Activated T-helper 1 cell treated with anti-CD3 and anti-CD28 coated beads, Interleukin-12 subunit alpha, Interleukin-12 subunit beta, Interleukin-2, Interleukin-4 antibody, amounts not matched to agents 30 ng/mL and 10 ng/mL and 1 ng/mL, durations not matched to agents 14 hours and 24 hours and 36 hours (primary cell): ENCODE measurements at regions of chr2 and their contacts with region 1.

Region 1: GRCh38 chr2:202375609-202376408 is at the start of gene BMPR2:
- DNase-seq: peak; percentile 84
- H3K4me3 Mint-ChIP-seq: peak within 1 kb of the TSS; percentile 99
- H3K27ac Mint-ChIP-seq: peak within 1 kb of the TSS; percentile 83
- H3K4me1 Mint-ChIP-seq: peaks cover 31% of the 10 kb centered on the region
- H3K27me3 Mint-ChIP-seq: no peaks in the 10 kb centered on the region
- total RNA-seq, gene BMPR2: 5.5 and 6.1 TPM in 2 replicates

Region 2: DNA sequence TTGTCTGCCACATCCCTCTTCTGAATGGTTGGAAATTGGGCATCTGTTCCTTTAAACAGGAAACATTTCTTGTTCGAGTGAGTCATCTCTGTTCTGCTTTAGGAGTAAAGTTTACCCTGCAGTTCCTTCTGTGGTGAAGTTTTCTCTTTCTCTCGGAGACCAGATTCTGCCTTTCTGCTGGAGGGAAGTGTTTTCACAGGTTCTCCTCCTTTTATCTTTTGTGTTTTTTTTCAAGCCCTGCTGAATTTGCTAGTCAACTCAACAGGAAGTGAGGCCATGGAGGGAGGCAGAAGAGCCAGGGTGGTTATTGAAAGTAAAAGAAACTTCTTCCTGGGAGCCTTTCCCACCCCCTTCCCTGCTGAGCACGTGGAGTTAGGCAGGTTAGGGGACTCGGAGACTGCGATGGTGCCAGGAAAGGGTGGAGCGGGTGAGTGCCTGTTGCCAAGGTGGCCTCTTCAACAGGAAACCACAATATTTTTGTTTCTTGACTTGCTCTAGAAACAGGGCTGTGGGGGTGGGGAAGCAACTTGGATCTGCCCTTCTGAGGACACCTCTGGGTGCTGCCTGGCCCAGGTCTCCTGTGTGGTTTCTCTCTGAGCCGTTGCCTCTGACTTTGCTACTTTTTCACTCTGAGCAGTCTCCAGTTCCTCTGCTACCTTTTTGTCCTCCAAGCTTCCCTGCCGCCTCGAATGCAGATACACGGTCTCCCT is 1117.7 kb before region 1 on chr2:
- intact Hi-C with region 1: loop called (anchors 10 kb)
- DNase-seq: peak; percentile 93
- H3K4me3 Mint-ChIP-seq: peak overlapping the region; percentile 91
- H3K27ac Mint-ChIP-seq: peak overlapping the region; percentile 100
- H3K4me1 Mint-ChIP-seq: peaks cover 84% of the 10 kb centered on the region
- H3K27me3 Mint-ChIP-seq: no peaks in the 10 kb centered on the region

Region 3: GRCh38 chr2:202238234-202239197 is 137.3 kb before region 1 on chr2 and contains the start of gene SUMO1:
- intact Hi-C with region 1: loop called (anchors 2 kb)
- DNase-seq: peak; percentile 89
- H3K4me3 Mint-ChIP-seq: peak within 1 kb of the TSS; percentile 98
- H3K27ac Mint-ChIP-seq: peak within 1 kb of the TSS; percentile 93
- H3K4me1 Mint-ChIP-seq: peaks cover 26% of the 10 kb centered on the region
- H3K27me3 Mint-ChIP-seq: peaks cover 4% of the 10 kb centered on the region
- total RNA-seq, gene SUMO1: 126 and 127 TPM in 2 replicates

Region 4: DNA sequence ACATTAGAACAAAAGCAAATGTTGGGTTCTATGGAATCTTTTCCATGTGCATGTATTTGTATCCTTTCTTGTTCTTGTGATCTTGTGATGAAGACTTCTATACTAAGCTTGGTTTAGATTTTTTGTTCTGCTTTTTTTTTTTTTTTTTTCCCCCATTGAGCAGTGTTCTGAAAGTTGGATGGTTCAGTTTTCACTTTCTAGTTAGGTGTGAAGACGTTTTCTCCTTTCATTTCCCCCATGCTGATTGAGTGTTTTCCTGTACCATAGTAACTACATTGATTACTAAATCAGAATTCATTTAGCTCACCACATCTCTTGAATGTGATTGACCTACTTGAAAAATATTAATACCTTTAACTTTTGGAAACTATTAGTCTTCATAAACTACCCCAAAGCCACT is 76.1 kb before region 1 on chr2:
- intact Hi-C with region 1: loop called (anchors 5 kb)
- DNase-seq: no peak
- H3K4me3 Mint-ChIP-seq: no peak overlapping the region
- H3K27ac Mint-ChIP-seq: peak overlapping the region; percentile 71
- H3K4me1 Mint-ChIP-seq: peaks cover 16% of the 10 kb centered on the region
- H3K27me3 Mint-ChIP-seq: no peaks in the 10 kb centered on the region

Region 5: GRCh38 chr2:202911512-202912341 is 535.9 kb after region 1 on chr2 and contains the starts of genes CARF and WDR12:
- intact Hi-C with region 1: loop called (anchors 1 kb)
- DNase-seq: peak; percentile 87
- H3K4me3 Mint-ChIP-seq: peak within 1 kb of the TSS; percentile 96
- H3K27ac Mint-ChIP-seq: peak within 1 kb of the TSS; percentile 98
- H3K4me1 Mint-ChIP-seq: peaks cover 31% of the 10 kb centered on the region
- H3K27me3 Mint-ChIP-seq: no peaks in the 10 kb centered on the region
- total RNA-seq, gene CARF: 3.6 and 4.3 TPM in 2 replicates
- total RNA-seq, gene WDR12: 149 and 165 TPM in 2 replicates

Region 6: DNA sequence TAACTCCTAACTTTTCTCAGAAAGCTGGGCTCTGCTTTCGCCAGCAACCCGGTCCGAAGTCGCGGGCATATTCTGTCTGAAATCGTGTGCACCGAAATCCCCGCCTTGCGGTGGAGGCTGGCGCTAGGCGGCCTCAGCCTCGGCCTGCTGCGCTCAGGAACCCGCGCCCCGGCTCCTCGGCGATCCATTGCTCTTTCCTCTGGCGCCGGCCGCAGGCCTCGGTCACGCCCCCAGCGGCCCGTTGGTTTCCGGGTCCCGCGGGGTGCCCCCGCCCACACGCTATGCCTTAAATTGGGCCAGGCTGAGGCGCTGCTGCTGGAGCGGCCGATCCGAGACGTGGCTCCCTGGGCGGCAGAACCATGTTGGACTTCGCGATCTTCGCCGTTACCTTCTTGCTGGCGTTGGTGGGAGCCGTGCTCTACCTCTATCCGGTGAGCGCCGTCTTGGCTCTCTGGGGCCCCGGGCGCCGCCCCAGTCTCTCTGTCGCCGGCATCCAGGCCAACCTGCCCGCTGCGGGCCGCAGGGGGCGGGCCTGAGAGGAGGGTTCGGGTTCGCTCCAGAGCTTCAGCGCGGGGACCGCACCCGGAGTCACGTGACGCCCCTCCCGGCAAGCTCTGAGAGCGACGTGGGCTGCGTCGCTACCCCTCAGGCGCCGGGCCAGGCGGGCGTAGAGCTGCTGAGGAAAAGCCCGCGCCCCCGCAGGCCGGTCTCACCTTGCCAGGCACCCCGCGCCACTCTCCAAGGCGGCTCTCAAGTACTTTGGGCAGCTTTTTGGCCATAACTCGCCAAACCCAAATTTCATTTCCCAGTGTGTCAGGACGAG is 863.1 kb after region 1 on chr2 and contains the start of gene CYP20A1:
- intact Hi-C with region 1: loop called (anchors 2 kb)
- DNase-seq: peak; percentile 97
- H3K4me3 Mint-ChIP-seq: peak within 1 kb of the TSS; percentile 94
- H3K27ac Mint-ChIP-seq: peak within 1 kb of the TSS; percentile 98
- H3K4me1 Mint-ChIP-seq: peaks cover 26% of the 10 kb centered on the region
- H3K27me3 Mint-ChIP-seq: no peaks in the 10 kb centered on the region
- total RNA-seq, gene CYP20A1: 23.1 and 26.0 TPM in 2 replicates